ENCODE measurements at regions of chrX and their contacts with region 1.

Region 1: GRCh38 chrX:153981771-153982533 is 9.4 kb downstream of the TMEM187 start:
- DNase-seq: peak; percentile 39
- ATAC-seq: no peak
- H3K4me3 ChIP-seq: peak overlapping the region in 2 of 5 experiments; percentile 9 to 24
- H3K4me3 Mint-ChIP-seq: peak overlapping the region; percentile 83
- H3K27ac ChIP-seq: peak overlapping the region; percentile 69 to 78
- H3K27ac Mint-ChIP-seq: peak overlapping the region; percentile 97
- H3K4me1 ChIP-seq: peaks cover 46 to 67% of the 10 kb centered on the region in 2 donors
- H3K4me1 Mint-ChIP-seq: peaks cover 50% of the 10 kb centered on the region
- H3K27me3 ChIP-seq: no peaks in the 10 kb centered on the region
- H3K27me3 Mint-ChIP-seq: no peaks in the 10 kb centered on the region
- CTCF ChIP-seq: no peak

Region 2: DNA sequence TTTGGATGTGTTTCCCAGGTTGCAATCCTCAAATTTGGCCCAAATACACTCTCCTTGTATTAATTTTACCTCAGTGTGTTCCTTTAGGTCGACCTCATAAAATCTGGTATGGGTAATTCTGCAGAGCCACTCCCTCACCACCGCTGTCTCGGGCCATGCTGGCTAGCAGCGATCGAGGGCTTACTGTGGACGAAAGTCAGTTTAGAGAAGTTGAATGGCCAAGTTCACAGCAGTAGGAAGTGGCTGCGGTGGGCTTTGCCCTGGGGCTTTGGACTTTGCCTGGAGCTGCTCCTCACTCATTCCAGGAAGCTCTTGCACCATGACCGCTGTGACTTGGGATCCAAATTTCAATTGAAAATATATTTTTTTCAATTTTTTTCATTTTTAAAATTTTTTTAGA is 10.2 kb after region 1 on chrX:
- CTCF ChIA-PET with region 1: no interaction called
- POLR2A ChIA-PET with region 1: no interaction called
- intact Hi-C with region 1: no loop called
- DNase-seq: no peak
- ATAC-seq: no peak
- H3K4me3 ChIP-seq: no peak overlapping the region
- H3K4me3 Mint-ChIP-seq: no peak overlapping the region
- H3K27ac ChIP-seq: no peak overlapping the region
- H3K27ac Mint-ChIP-seq: no peak overlapping the region
- H3K4me1 ChIP-seq: no peaks in the 10 kb centered on the region
- H3K4me1 Mint-ChIP-seq: no peaks in the 10 kb centered on the region
- H3K27me3 ChIP-seq: no peaks in the 10 kb centered on the region
- H3K27me3 Mint-ChIP-seq: no peaks in the 10 kb centered on the region
- CTCF ChIP-seq: no peak

Region 3: DNA sequence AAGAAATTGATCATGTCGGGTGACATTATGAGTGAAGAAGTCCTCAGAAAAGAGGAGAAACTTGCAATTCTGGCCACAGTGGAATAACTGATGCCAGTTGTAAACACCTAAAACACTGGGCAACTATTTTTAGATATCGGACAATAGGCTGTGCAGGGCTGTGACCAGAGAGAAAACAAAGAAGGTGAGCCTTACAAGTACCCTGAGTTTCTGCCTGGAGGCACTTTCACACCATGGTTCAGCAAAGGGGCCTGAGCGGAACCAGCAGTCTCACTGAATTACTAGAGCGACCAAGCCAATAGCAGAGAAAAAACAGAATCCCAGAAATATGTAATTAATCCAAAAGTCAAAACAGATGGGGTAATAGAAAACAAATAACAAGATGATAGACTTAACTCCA is 26.6 kb after region 1 on chrX:
- CTCF ChIA-PET with region 1: interaction called, 21 read pairs
- POLR2A ChIA-PET with region 1: interaction called, 8 read pairs
- intact Hi-C with region 1: loop called (anchors 2 kb)
- DNase-seq: no peak
- ATAC-seq: peak; percentile 34
- H3K4me3 ChIP-seq: no peak overlapping the region
- H3K4me3 Mint-ChIP-seq: peak overlapping the region; percentile 55
- H3K27ac ChIP-seq: peak overlapping the region; percentile 73 to 82
- H3K27ac Mint-ChIP-seq: peak overlapping the region; percentile 98
- H3K4me1 ChIP-seq: peaks cover 28 to 51% of the 10 kb centered on the region in 2 donors
- H3K4me1 Mint-ChIP-seq: peaks cover 40% of the 10 kb centered on the region
- H3K27me3 ChIP-seq: no peaks in the 10 kb centered on the region
- H3K27me3 Mint-ChIP-seq: no peaks in the 10 kb centered on the region
- CTCF ChIP-seq: no peak

Region 4: DNA sequence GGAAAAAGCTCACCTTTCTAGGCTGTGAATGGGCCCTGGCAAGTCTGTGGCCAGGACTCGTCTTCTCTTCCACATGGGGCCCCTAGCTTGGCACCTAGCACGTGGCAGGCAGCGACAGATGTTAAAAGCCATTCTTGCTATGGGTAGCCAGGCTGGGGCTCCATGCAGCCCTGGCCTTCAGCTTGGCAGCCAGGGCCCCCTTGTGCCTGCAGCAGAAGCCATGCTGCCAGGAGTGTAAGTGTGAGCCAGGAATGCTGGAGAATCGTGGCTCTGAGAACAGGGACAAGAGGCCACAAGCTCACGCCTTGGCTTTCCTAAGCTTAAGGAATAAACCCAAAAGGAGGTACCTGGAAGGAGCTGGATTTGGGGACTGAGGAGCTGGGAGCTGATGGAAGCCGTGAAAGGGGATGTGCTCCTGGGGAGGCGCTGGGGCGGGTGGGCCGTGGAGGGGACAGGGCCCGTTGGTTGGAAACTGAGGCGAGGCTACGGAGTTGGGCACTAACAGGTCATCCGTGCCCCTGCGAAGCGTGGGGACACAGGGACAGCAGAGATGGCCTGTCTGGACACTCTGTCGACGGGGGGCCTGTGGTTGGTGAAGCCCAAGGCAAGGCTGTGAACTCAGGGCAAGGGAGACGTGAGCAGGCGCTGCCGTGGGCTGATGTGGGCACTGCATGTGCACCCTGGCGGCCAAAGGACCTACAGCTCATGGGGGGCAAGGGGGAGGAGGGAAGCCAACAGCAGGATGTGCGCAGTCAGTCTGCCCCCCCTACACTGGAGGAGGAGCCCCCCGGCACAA is 161.2 kb after region 1 on chrX:
- CTCF ChIA-PET with region 1: no interaction called
- POLR2A ChIA-PET with region 1: no interaction called
- intact Hi-C with region 1: no loop called
- DNase-seq: no peak
- ATAC-seq: no peak
- H3K4me3 ChIP-seq: no peak overlapping the region
- H3K4me3 Mint-ChIP-seq: no peak overlapping the region
- H3K27ac ChIP-seq: no peak overlapping the region
- H3K27ac Mint-ChIP-seq: no peak overlapping the region
- H3K4me1 ChIP-seq: no peaks in the 10 kb centered on the region
- H3K4me1 Mint-ChIP-seq: no peaks in the 10 kb centered on the region
- H3K27me3 ChIP-seq: no peaks in the 10 kb centered on the region
- H3K27me3 Mint-ChIP-seq: no peaks in the 10 kb centered on the region
- CTCF ChIP-seq: no peak

Region 5: GRCh38 chrX:154308108-154308946 is 326.4 kb after region 1 on chrX:
- CTCF ChIA-PET with region 1: no interaction called
- POLR2A ChIA-PET with region 1: no interaction called
- intact Hi-C with region 1: no loop called
- DNase-seq: peak; percentile 84
- ATAC-seq: peak; percentile 78
- H3K4me3 ChIP-seq: no peak overlapping the region
- H3K4me3 Mint-ChIP-seq: peak overlapping the region; percentile 39
- H3K27ac ChIP-seq: no peak overlapping the region
- H3K27ac Mint-ChIP-seq: peak overlapping the region; percentile 63
- H3K4me1 ChIP-seq: peaks cover 34 to 43% of the 10 kb centered on the region in 2 donors
- H3K4me1 Mint-ChIP-seq: peaks cover 42% of the 10 kb centered on the region
- H3K27me3 ChIP-seq: no peaks in the 10 kb centered on the region
- H3K27me3 Mint-ChIP-seq: no peaks in the 10 kb centered on the region
- CTCF ChIP-seq: peak; percentile 67

Measured in B cell (primary cell).